ENCODE measurements at regions of chr11 and their contacts with region 1.

Region 1: GRCh38 chr11:46392421-46393230 is 1.1 kb upstream of the CHRM4 start:
- ATAC-seq: peak; percentile 28 to 71 (median 48)
- H3K4me3 ChIP-seq: peak overlapping the region; percentile 50 to 71 (median 60)
- H3K27ac ChIP-seq: no peak overlapping the region
- H3K4me1 ChIP-seq: peaks cover 27 to 30% of the 10 kb centered on the region in 2 donors

Region 2: DNA sequence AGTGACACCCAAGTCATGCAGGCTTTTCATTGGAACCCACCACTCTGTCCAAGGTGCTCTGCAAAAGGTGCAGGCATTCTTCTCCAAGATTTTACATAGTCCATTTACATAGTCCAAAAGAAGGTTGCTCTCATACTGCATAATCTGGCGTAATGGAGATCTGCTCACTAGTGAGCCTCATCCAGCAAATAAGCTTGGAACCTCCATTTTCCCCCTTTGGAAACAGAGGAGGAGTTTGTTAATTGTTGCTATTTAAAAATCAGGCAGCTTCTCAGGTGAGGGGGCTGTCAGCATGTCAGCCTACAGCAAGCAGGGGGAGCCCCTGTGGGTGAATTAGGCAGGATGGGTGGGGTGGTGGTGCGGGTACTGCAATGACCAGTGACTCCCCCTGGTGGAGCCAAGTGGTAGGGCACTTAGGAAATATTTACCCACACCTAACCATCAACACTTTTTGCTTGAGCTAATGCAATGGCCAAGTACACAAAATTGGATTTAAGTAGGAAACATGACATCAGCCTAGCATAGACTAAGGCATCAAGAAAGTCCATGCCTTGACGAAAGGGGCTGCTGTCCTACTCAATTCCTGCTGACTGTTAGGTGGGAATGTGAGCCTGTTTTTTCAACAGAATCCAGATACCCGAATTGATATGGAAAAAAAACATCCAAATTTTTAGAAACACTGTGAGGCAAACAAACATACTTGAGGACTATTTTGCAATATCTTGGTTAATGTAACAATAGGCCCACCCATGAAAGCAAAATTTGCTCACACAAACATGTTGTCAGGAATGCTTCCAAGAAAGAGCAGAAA is 136.7 kb after region 1 on chr11:
- in situ Hi-C with region 1: loop called in 4 of 9 experiments (anchors 10 to 25 kb)
- ATAC-seq: peak; percentile 26 to 81 (median 74)
- H3K4me3 ChIP-seq: no peak overlapping the region
- H3K27ac ChIP-seq: no peak overlapping the region
- H3K4me1 ChIP-seq: peaks cover 0 to 3% of the 10 kb centered on the region in 2 donors

Region 3: GRCh38 chr11:46537537-46538295 is 145.1 kb after region 1 on chr11:
- in situ Hi-C with region 1: loop called in 3 of 9 experiments (anchors 10 to 25 kb)
- ATAC-seq: peak; percentile 73 to 98 (median 90)
- H3K4me3 ChIP-seq: no peak overlapping the region
- H3K27ac ChIP-seq: no peak overlapping the region
- H3K4me1 ChIP-seq: peaks cover 0 to 4% of the 10 kb centered on the region in 2 donors

Measured in motor neuron (in vitro differentiated cells).